Spleen (tissue), 13 donors: ENCODE measurements at regions of chr19 and their contacts with region 1.

Region 1: GRCh38 chr19:36915992-36916830 is at the starts of genes ZNF568 and ZNF829:
- DNase-seq: peak; percentile 97
- H3K4me3 ChIP-seq: peak within 1 kb of the TSS; percentile 59 to 77 (median 69)
- H3K27ac ChIP-seq: peak within 1 kb of the TSS; percentile 92 to 99 (median 96)
- H3K4me1 ChIP-seq: peaks cover 13 to 27% (median 21%) of the 10 kb centered on the region in 6 donors
- H3K27me3 ChIP-seq: no peaks in the 10 kb centered on the region
- CTCF ChIP-seq: peak; percentile 28 to 79 (median 64)
- POLR2A ChIP-seq: peak in 1 of 3 donors; percentile 28
- total RNA-seq, gene ZNF568: 9.5 to 16.8 (median 12.4) TPM
- total RNA-seq, gene ZNF829: 2.7 to 4.7 (median 4.5) TPM

Region 2: GRCh38 chr19:36687214-36688056 is 228.8 kb before region 1 on chr19 and contains the start of gene ZNF567:
- intact Hi-C with region 1: loop called (anchors 10 kb)
- DNase-seq: peak; percentile 98
- H3K4me3 ChIP-seq: peak within 1 kb of the TSS; percentile 66 to 95 (median 76)
- H3K27ac ChIP-seq: peak within 1 kb of the TSS; percentile 10 to 87 (median 74)
- H3K4me1 ChIP-seq: peaks cover 9 to 31% (median 24%) of the 10 kb centered on the region in 6 donors
- H3K27me3 ChIP-seq: no peaks in the 10 kb centered on the region
- CTCF ChIP-seq: peak in 2 of 11 experiments; percentile 20 to 33
- POLR2A ChIP-seq: peak in 2 of 3 donors; percentile 35 to 58
- total RNA-seq, gene ZNF567: 7.5 to 24.1 (median 11.7) TPM

Region 3: DNA sequence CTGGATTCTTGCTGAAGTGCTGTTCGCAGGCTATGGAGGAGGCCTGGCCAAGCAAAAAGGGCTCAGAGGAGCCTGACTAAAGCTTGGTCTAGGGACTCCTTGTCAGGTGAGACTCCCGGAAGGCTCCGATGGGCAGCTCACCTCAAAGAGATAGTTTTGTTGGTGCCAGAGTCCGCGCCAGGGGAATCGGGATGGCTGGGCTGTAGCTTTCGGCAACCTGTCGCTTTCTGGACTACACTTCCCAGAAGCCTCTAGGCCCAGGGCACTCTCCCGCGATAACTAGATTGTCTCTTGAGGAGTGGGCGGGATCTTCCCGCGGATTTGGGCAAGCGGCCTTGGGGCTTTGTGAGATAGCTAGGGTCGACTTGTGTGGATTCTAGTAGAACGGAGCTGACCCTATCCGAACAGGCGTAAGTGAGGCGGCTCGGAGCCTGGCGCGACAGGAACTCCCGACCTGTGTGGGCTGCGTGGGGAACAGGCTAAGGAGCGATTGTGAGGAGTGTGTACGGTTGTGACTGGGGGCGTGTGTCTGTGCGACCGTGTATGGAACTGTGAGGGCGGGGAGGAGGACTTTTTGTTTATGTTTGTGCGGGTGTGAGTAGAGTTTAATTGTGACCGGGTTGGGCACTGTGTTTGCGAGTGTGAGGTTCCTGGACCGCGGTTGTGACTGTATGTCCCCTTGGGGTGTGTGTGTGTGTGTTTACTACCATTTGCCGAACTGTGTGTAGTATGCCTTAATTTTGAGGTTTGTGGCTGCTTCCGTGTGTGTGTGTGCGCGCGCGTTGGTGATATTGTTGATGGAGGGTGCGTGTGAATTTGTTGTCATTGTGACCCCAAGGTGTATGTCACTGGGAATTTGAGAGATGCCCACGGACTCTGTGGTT is 65.4 kb before region 1 on chr19 and contains the start of gene ZNF345:
- intact Hi-C with region 1: loop called (anchors 10 kb)
- DNase-seq: peak; percentile 94
- H3K4me3 ChIP-seq: peak within 1 kb of the TSS; percentile 57 to 99 (median 90)
- H3K27ac ChIP-seq: peak within 1 kb of the TSS; percentile 84 to 94 (median 88)
- H3K4me1 ChIP-seq: peaks cover 10 to 39% (median 28%) of the 10 kb centered on the region in 6 donors
- H3K27me3 ChIP-seq: no peaks in the 10 kb centered on the region
- CTCF ChIP-seq: no peak
- POLR2A ChIP-seq: peak in 1 of 3 donors; percentile 56
- total RNA-seq, gene ZNF345: 4.8 to 18.2 (median 9.8) TPM

Region 4: DNA sequence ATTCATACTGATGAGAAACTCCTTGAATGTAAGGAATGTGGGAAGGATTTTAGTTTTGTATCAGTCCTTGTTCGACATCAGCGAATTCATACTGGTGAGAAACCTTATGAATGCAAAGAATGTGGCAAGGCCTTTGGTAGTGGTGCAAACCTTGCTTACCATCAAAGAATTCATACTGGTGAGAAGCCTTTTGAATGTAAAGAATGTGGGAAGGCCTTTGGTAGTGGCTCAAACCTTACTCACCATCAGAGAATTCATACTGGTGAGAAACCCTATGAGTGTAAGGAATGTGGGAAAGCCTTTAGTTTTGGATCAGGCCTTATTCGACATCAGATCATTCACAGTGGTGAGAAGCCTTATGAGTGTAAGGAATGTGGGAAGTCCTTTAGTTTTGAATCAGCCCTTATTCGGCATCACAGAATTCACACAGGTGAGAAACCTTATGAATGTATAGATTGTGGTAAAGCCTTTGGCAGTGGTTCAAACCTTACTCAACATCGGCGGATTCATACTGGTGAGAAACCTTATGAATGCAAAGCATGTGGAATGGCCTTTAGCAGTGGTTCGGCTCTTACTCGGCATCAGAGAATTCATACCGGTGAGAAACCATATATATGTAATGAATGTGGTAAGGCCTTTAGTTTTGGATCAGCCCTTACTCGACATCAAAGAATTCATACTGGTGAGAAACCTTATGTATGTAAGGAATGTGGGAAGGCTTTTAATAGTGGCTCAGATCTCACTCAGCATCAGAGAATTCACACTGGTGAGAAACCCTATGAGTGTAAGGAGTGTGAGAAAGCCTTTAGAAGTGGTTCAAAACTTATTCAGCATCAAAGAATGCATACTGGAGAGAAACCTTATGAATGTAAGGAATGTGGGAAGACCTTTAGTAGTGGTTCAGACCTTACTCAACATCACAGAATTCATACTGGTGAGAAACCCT is 38.9 kb before region 1 on chr19:
- intact Hi-C with region 1: no loop called
- DNase-seq: no peak
- H3K4me3 ChIP-seq: peak overlapping the region in 1 of 8 donors; percentile 31
- H3K27ac ChIP-seq: no peak overlapping the region
- H3K4me1 ChIP-seq: no peaks in the 10 kb centered on the region
- H3K27me3 ChIP-seq: no peaks in the 10 kb centered on the region
- CTCF ChIP-seq: no peak
- POLR2A ChIP-seq: no peak

Region 5: DNA sequence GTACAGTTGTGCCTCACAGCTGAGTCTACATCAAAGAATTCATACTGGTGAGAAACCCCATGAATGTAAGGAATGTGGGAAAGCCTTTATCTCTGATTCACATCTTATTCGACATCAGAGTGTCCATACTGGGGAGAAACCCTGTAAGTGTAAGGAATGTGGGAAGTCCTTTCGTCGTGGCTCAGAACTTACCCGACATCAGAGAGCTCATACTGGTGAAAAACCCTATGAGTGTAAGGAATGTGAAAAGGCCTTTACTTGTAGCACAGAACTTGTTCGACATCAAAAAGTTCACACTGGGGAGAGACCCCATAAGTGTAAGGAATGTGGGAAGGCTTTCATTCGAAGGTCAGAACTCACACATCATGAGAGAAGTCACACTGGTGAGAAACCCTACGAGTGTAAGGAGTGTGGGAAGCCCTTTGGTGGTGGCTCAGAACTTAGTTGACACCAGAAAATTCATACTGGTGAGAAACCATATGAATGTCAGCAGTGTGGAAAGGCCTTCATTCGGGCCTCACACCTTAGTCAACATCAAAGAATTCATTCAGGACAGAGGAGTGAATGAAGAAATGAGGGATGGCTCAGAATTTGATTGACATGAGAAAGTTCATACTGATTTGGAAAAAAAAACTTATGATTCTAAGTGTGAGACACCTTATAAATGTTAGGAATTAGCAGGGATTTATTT is 81.1 kb after region 1 on chr19:
- intact Hi-C with region 1: no loop called
- DNase-seq: no peak
- H3K4me3 ChIP-seq: no peak overlapping the region
- H3K27ac ChIP-seq: no peak overlapping the region
- H3K4me1 ChIP-seq: no peaks in the 10 kb centered on the region
- H3K27me3 ChIP-seq: no peaks in the 10 kb centered on the region
- CTCF ChIP-seq: no peak
- POLR2A ChIP-seq: no peak